Dorsolateral prefrontal cortex (tissue), 120 donors: ENCODE measurements at regions of chr3 and their contacts with region 1.

Region 1: GRCh38 chr3:74626011-74626410 is 11.6 kb upstream of the CNTN3 start:
- DNase-seq: no peak
- H3K4me3 ChIP-seq: no peak overlapping the region
- H3K27ac ChIP-seq: no peak overlapping the region
- H3K27me3 ChIP-seq: no peaks in the 10 kb centered on the region
- CTCF ChIP-seq: no peak

Region 2: GRCh38 chr3:74523811-74524210 is 102.2 kb before region 1 on chr3:
- intact Hi-C with region 1: no loop called
- DNase-seq: no peak
- H3K4me3 ChIP-seq: no peak overlapping the region
- H3K27ac ChIP-seq: no peak overlapping the region
- H3K27me3 ChIP-seq: no peaks in the 10 kb centered on the region
- CTCF ChIP-seq: no peak

Region 3: GRCh38 chr3:74561881-74562280 is 64.1 kb before region 1 on chr3:
- intact Hi-C with region 1: loop called in 1 of 2 experiments (anchors 2 kb)
- DNase-seq: no peak
- H3K4me3 ChIP-seq: no peak overlapping the region
- H3K27ac ChIP-seq: peak overlapping the region in 33 of 59 donors; percentile 0 to 79 (median 44)
- H3K27me3 ChIP-seq: no peaks in the 10 kb centered on the region
- CTCF ChIP-seq: no peak

Region 4: GRCh38 chr3:75180235-75180944 is 554.4 kb after region 1 on chr3:
- intact Hi-C with region 1: no loop called
- DNase-seq: no peak
- H3K4me3 ChIP-seq: no peak overlapping the region
- H3K27ac ChIP-seq: no peak overlapping the region
- H3K27me3 ChIP-seq: peaks cover 0 to 3% (median 0%) of the 10 kb centered on the region in 45 donors
- CTCF ChIP-seq: no peak